ENCODE measurements at regions of chr2 and their contacts with region 1.

Region 1: DNA sequence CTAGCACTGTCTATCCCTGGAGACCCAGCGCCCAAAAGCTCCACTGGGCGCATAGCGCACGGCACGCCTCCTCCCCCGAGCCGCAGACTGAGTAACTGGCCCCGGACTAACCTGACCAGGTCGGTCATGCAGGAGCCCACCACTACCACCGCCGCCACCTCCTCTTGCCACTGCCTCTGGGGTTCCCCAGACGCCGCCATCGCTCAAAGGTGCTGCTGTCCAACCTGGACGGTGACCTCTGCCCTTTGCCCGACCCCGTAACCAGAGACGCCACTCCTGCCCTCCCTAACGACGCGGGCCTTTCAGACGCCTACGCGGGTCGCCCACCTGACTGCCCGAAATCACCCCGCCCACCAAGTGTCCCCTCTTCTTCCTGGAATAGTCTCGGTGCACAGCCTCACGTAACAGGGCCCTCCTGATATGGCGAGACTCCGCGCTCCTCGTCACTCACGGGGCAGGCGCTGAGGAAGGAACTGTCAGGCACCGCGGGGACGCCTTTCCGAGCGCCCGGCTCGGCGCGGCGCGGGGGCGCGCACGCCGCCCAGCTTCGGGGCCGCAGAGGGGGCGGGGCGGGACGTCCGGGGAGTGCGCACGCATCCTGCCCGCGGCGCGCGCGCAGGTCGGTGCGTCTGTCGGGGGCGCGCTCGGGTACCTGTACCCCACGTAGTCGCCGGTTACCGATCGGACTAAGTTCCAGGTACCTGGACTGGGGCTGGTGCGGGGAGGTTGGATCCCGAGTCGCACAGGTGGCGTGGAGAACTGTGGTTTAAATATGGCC is at the starts of genes BABAM2 and RBKS:
- DNase-seq: peak; percentile 93 to 94
- H3K4me3 ChIP-seq: peak within 1 kb of the TSS; percentile 63
- H3K4me3 Mint-ChIP-seq: peak within 1 kb of the TSS; percentile 100
- H3K27ac Mint-ChIP-seq: peak within 1 kb of the TSS; percentile 99
- H3K4me1 ChIP-seq: no peaks in the 10 kb centered on the region
- H3K4me1 Mint-ChIP-seq: no peaks in the 10 kb centered on the region
- H3K27me3 ChIP-seq: no peaks in the 10 kb centered on the region
- H3K27me3 Mint-ChIP-seq: no peaks in the 10 kb centered on the region
- CTCF ChIP-seq: no peak
- total RNA-seq, gene BABAM2: 50.7 and 57.3 TPM in 2 replicates
- total RNA-seq, gene RBKS: 7.1 and 7.4 TPM in 2 replicates

Region 2: DNA sequence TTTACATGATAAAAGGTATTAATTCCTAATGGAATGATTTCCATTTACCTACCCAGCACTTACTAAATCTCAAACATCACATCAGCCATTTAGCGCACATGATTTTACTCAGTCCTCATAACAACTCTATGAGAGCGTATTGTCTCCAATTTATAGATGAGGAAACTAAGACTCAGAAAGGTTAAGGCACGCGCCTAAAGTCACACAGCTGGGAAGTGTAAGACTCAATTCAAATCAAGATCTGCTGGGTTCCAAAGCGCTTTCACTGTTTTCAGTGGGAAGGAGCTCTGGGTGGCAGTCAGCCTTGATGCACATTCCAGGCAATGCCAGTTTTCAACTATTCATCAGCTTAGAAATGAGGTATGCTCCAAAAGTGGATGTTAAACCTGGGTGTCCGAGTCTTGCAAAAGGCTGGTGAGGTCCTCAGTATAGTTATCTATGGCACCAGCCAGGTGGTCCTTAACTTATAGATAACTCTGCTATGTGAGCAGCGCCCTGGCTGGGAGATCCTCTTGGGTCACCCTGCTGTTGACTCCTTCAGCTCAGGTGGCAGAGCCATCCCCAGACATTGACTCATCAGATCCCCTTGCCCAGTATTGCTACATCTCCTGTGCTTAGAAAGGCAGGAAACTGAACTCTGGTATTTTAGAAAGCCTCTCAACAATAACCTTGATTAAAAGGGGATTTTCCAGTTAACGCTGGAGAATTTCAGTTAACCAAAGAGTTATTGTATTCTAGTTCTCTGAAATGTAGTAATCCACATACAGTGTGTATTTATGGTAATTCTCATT is 179.5 kb before region 1 on chr2:
- CTCF ChIA-PET with region 1: no interaction called
- POLR2A ChIA-PET with region 1: interaction called, 5 read pairs
- intact Hi-C with region 1: loop called (anchors 1 kb)
- DNase-seq: no peak
- H3K4me3 ChIP-seq: no peak overlapping the region
- H3K4me3 Mint-ChIP-seq: no peak overlapping the region
- H3K27ac Mint-ChIP-seq: no peak overlapping the region
- H3K4me1 ChIP-seq: peaks cover 18% of the 10 kb centered on the region
- H3K4me1 Mint-ChIP-seq: peaks cover 10% of the 10 kb centered on the region
- H3K27me3 ChIP-seq: no peaks in the 10 kb centered on the region
- H3K27me3 Mint-ChIP-seq: no peaks in the 10 kb centered on the region
- CTCF ChIP-seq: no peak

Region 3: GRCh38 chr2:27807476-27807875 is 82.9 kb before region 1 on chr2:
- CTCF ChIA-PET with region 1: no interaction called
- POLR2A ChIA-PET with region 1: no interaction called
- intact Hi-C with region 1: loop called (anchors 10 kb)
- DNase-seq: peak; percentile 55 to 59
- H3K4me3 ChIP-seq: no peak overlapping the region
- H3K4me3 Mint-ChIP-seq: no peak overlapping the region
- H3K27ac Mint-ChIP-seq: no peak overlapping the region
- H3K4me1 ChIP-seq: peaks cover 16% of the 10 kb centered on the region; the same call in 1 of the 2 replicates
- H3K4me1 Mint-ChIP-seq: no peaks in the 10 kb centered on the region
- H3K27me3 ChIP-seq: no peaks in the 10 kb centered on the region
- H3K27me3 Mint-ChIP-seq: no peaks in the 10 kb centered on the region
- CTCF ChIP-seq: peak; percentile 48 to 66

Region 4: DNA sequence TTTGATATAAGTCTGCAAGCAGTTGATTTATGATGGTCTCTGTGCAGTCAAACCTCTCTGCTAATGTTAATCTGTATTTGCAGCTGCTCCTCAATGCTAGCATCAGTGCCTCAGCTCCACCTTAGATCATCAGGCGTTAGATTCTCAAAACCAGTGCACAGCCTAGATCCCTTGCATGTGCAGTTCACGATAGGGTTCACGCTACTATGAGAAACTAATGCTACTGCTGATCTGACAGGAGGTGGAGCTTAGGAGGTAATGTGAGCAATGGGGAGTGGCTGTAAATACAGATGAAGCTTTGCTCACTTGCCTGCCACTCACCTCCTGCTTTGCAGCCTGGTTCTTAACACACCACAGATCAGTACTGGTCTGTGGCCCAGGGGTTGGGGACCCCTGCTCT is 18.5 kb before region 1 on chr2:
- CTCF ChIA-PET with region 1: no interaction called
- POLR2A ChIA-PET with region 1: no interaction called
- intact Hi-C with region 1: no loop called
- DNase-seq: no peak
- H3K4me3 ChIP-seq: no peak overlapping the region
- H3K4me3 Mint-ChIP-seq: no peak overlapping the region
- H3K27ac Mint-ChIP-seq: no peak overlapping the region
- H3K4me1 ChIP-seq: no peaks in the 10 kb centered on the region
- H3K4me1 Mint-ChIP-seq: peaks cover 7% of the 10 kb centered on the region
- H3K27me3 ChIP-seq: no peaks in the 10 kb centered on the region
- H3K27me3 Mint-ChIP-seq: no peaks in the 10 kb centered on the region
- CTCF ChIP-seq: no peak

Region 5: DNA sequence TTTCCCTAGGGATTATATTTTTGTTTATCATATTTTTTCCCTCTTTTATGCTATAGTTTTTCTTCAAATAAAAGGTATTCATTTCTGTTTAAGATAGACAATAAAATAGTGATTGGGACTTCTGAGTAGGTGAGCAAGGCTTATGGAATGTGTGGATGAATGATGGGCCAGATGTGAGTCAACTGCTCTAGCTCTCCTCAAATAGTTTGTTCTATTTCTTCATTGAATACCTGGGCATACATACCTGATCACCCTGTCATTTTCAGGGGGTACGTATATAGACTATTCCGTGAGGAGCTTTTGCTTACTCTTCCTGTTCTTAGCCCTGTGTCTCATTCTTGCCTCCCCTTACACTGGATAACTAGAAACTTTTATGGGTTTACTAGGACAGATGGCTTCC is 42.1 kb after region 1 on chr2:
- CTCF ChIA-PET with region 1: no interaction called
- POLR2A ChIA-PET with region 1: no interaction called
- intact Hi-C with region 1: loop called (anchors 2 kb)
- DNase-seq: peak in 1 of 2 experiments; percentile 31
- H3K4me3 ChIP-seq: no peak overlapping the region
- H3K4me3 Mint-ChIP-seq: peak overlapping the region; percentile 11
- H3K27ac Mint-ChIP-seq: peak overlapping the region; percentile 43
- H3K4me1 ChIP-seq: peaks cover 40% of the 10 kb centered on the region
- H3K4me1 Mint-ChIP-seq: peaks cover 21% of the 10 kb centered on the region
- H3K27me3 ChIP-seq: no peaks in the 10 kb centered on the region
- H3K27me3 Mint-ChIP-seq: no peaks in the 10 kb centered on the region
- CTCF ChIP-seq: no peak